PC-9 (cell line): ENCODE measurements at regions of chr2 and their contacts with region 1.

Region 1: DNA sequence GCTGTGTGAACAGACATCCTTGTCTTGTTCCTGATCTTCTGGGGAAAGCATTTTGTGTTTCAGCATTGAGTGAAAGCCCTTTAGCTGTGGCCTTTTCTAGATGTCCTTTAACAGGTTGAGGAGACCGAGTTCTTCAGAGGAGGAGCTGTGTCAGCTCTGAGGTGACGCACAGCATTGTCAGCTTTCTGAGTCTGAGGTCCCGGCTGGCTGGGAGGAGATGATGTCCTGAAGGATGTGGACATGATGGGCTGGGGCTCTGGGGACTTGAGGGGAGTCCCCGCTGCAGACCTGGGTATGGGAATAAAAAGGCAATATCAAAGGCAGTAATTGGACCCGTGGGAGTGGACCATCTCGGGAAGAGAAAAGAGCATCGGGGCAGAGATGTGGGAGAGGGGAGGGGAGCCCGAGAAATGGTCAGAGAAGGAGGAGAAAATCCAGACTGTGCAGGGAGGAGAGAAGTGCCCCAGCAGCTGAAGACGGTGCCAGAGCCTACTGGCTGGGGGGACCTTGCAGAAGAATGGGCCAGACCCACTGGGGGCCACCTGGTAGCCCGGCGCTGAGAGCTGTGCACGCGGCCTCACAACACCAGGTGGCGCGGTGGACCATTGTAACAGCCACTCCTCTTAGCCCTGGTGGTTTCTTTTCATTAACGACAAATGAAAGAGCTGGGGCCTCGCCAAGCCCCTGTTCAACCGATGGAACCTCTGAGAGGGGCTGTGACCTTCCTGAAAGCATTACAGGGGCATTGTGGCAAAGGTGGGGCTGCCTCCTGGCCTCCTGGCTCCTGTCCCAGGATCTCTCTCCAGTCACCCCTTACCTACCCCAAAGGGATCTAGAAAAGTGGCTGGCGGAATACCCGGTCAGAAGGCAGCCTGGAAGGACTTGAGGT is 61.6 kb downstream of the ST3GAL5 start:
- DNase-seq: peak; percentile 49 to 65
- H3K4me3 ChIP-seq: no peak overlapping the region
- H3K27ac ChIP-seq: no peak overlapping the region
- H3K4me1 ChIP-seq: peaks cover 6% of the 10 kb centered on the region; the same call in 1 of the 2 replicates
- H3K27me3 ChIP-seq: no peaks in the 10 kb centered on the region
- CTCF ChIP-seq: peak; percentile 83

Region 2: GRCh38 chr2:85678794-85679672 is 148.2 kb before region 1 on chr2:
- CTCF ChIA-PET with region 1: interaction called, 13 read pairs
- POLR2A ChIA-PET with region 1: no interaction called
- intact Hi-C with region 1: no loop called
- DNase-seq: peak; percentile 60 to 89
- H3K4me3 ChIP-seq: peak overlapping the region; percentile 41; the same call in 1 of the 2 replicates
- H3K27ac ChIP-seq: peak overlapping the region; percentile 99; the same call in 1 of the 2 replicates
- H3K4me1 ChIP-seq: peaks cover 38% of the 10 kb centered on the region
- H3K27me3 ChIP-seq: no peaks in the 10 kb centered on the region
- CTCF ChIP-seq: peak; percentile 97

Region 3: GRCh38 chr2:85804583-85804982 is 22.7 kb before region 1 on chr2:
- CTCF ChIA-PET with region 1: interaction called, 13 read pairs
- POLR2A ChIA-PET with region 1: no interaction called
- intact Hi-C with region 1: no loop called
- DNase-seq: no peak
- H3K4me3 ChIP-seq: no peak overlapping the region
- H3K27ac ChIP-seq: no peak overlapping the region
- H3K4me1 ChIP-seq: peaks cover 6% of the 10 kb centered on the region
- H3K27me3 ChIP-seq: no peaks in the 10 kb centered on the region
- CTCF ChIP-seq: peak; percentile 78

Region 4: DNA sequence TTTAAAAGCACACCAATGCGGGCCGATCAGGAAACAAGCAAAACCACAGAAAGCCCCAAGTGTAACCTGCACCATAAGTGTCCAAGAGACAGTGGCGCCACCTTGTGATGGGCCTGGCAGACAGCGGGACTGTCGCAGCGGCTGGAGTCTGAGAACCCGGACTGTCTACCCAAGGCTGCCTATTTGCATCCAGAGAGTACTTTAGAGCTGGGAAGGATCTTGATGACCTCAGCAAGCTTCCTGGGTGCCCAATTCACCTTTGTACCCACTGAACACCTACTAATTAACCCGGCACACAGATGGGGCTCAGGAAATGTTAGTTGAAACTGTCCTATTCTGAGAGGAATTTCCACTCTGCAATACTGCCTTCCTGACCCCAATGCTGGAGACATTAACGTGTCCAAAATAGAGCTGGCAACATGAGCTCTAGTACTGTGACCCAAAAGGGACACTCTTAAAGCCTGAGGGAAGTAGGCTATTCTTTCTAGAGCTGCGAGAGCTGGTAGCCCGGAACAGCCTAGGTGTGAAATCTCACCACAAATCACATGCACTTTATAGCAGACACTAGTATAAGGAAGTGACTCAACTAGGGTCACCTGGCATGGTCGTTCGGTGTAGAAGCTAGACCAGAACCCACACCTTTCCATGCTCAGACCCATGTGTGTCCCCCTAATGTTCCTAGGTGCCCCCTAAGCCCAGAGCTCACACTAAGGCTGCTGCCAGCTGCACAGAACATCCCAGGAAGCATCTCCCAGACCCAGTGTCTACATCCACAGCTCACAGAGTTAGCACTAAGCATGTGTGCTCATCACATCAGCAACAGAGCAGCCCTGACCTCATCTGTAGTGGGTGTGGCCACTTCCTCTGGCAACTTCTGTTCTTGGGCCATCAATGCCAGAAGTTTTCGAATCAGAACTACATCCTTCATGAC is 253.0 kb after region 1 on chr2:
- CTCF ChIA-PET with region 1: interaction called, 25 read pairs
- POLR2A ChIA-PET with region 1: no interaction called
- intact Hi-C with region 1: loop called (anchors 1 kb)
- DNase-seq: peak in 1 of 2 experiments; percentile 62
- H3K4me3 ChIP-seq: no peak overlapping the region
- H3K27ac ChIP-seq: no peak overlapping the region
- H3K4me1 ChIP-seq: no peaks in the 10 kb centered on the region
- H3K27me3 ChIP-seq: no peaks in the 10 kb centered on the region
- CTCF ChIP-seq: peak; percentile 76

Region 5: DNA sequence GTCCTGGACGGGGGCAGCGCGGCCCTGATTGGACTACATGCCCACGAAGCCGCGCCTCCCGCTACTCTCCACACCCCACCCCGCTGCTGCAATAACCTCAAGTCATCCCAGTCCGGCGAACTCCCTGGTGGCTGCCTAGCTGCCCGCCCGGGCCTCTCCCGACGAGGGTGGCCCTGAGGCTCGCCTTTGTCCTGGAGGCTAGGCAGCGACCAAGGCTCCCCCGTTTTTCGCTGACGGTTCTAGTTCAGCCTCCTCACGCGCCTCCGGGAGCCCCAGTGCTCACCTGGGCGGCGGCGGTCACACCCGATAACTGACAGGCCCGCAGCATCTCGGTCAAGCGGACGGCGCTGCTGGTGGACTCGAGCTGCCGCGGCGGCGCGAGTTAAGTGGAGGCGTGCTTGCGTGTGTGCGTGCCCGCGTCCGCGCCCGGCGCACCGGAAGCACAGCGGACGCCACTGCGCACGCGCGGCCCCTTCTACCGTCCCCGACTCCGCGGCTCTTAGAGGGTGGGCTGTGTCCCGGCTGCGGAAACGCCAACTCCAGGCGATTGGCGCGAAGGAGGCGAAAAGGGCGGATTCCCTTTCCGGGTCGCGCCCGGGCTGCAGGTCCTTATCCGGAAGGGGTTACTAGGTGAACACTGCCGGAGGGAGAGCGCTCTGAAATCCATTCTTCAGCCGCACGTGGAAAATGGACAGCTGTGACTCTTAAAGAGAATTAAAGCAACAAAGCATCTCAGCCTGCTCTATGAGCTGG is 368.0 kb after region 1 on chr2 and contains the start of gene IMMT:
- CTCF ChIA-PET with region 1: no interaction called
- POLR2A ChIA-PET with region 1: no interaction called
- intact Hi-C with region 1: loop called (anchors 10 kb)
- DNase-seq: peak; percentile 89 to 96
- H3K4me3 ChIP-seq: peak within 1 kb of the TSS; percentile 93
- H3K27ac ChIP-seq: peak within 1 kb of the TSS; percentile 97
- H3K4me1 ChIP-seq: peaks cover 38% of the 10 kb centered on the region
- H3K27me3 ChIP-seq: no peaks in the 10 kb centered on the region
- CTCF ChIP-seq: no peak
- total RNA-seq, gene IMMT: 108 and 114 TPM in 2 replicates